ENCODE measurements at regions of chr12 and their contacts with region 1.

Region 1: DNA sequence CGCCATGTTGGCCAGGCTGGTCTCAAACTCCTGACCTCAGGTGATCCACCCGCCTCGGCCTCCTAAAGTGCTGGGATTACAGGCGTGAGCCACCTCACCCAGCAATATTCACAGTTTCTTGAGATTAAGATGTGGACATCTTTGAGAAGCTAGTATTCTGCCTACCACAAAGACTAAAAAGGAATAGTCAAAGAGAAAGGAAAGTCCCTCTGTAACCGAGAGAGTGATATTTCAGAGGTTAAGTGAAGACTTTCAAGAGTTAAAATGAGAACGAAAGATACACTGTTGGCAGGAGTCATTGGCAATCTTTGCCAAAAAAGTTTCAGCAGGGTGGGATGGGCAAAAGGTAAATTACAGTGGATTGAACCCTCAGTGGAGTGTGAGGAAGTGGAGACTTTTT is 15.6 kb downstream of the DGKA start:
- DNase-seq: no peak
- H3K4me3 ChIP-seq: no peak overlapping the region
- H3K27ac ChIP-seq: no peak overlapping the region
- H3K27me3 ChIP-seq: no peaks in the 10 kb centered on the region
- CTCF ChIP-seq: no peak

Region 2: DNA sequence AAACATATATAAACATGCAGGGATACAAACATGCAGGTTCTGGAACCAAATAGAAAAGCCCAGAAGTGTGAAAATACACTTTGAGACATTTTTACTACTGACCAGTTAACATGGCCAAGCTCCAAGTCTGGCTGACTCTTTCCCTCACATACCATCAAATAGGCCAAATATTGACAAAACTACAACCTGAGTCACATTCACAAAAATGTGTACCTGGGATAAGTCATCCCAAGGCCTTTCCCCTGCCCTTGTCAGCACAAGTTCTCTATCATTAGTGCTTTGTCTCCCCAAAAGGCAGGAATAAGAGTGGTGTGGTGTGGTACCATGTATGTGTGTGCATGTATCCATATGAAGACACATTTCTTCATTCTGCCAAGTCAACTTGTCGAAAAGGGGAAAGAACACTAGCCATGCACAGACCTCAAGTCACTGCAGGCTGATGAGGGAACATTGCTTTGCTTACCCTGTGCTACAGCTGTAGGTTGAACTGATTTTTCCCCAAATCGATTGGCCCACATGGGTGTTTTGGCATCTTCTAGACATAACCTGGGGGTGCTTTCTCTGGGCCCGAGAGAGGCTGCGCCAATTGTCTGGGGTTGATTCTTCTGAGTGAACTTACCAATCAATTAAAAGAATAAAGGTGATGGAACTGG is 1878.0 kb before region 1 on chr12:
- CTCF ChIA-PET with region 1: no interaction called
- POLR2A ChIA-PET with region 1: no interaction called
- DNase-seq: no peak
- H3K4me3 ChIP-seq: no peak overlapping the region
- H3K27ac ChIP-seq: no peak overlapping the region
- H3K27me3 ChIP-seq: no peaks in the 10 kb centered on the region
- CTCF ChIP-seq: no peak

Region 3: GRCh38 chr12:55760663-55761062 is 185.9 kb before region 1 on chr12:
- CTCF ChIA-PET with region 1: interaction called, 11 read pairs
- POLR2A ChIA-PET with region 1: no interaction called
- DNase-seq: no peak
- H3K4me3 ChIP-seq: no peak overlapping the region
- H3K27ac ChIP-seq: no peak overlapping the region
- H3K27me3 ChIP-seq: no peaks in the 10 kb centered on the region
- CTCF ChIP-seq: no peak

Region 4: GRCh38 chr12:55874443-55874842 is 72.1 kb before region 1 on chr12:
- CTCF ChIA-PET with region 1: no interaction called
- POLR2A ChIA-PET with region 1: no interaction called
- DNase-seq: no peak
- H3K4me3 ChIP-seq: no peak overlapping the region
- H3K27ac ChIP-seq: no peak overlapping the region
- H3K27me3 ChIP-seq: no peaks in the 10 kb centered on the region
- CTCF ChIP-seq: no peak

Region 5: DNA sequence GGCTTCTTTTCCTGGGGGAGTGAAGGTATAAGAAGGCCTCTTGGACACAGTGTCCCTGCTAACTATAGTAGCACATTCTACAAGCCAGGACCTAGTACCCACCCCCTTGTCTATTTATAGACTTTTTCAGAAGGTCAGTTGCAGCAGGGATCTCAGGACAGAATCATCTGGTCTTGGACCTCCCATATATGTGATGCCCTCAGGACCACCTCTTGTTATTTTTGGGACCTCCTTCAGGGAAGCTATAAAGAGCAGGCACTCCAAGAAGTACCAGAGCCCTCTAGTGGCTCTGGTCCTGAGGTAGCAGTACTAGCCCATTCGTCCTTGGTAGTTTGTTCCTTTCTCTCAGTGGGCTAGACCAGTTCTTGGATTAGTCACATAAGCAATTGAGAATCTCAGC is 324.5 kb after region 1 on chr12:
- CTCF ChIA-PET with region 1: no interaction called
- POLR2A ChIA-PET with region 1: no interaction called
- DNase-seq: no peak
- H3K4me3 ChIP-seq: no peak overlapping the region
- H3K27ac ChIP-seq: no peak overlapping the region
- H3K27me3 ChIP-seq: no peaks in the 10 kb centered on the region
- CTCF ChIP-seq: peak; percentile 60

Region 6: GRCh38 chr12:56941299-56942017 is 994.9 kb after region 1 on chr12:
- CTCF ChIA-PET with region 1: no interaction called
- POLR2A ChIA-PET with region 1: no interaction called
- DNase-seq: no peak
- H3K4me3 ChIP-seq: no peak overlapping the region
- H3K27ac ChIP-seq: peak overlapping the region; percentile 39
- H3K27me3 ChIP-seq: peaks cover 9% of the 10 kb centered on the region
- CTCF ChIP-seq: no peak

Measured in AG04450 (cell line).